CD4-positive, alpha-beta T cell (primary cell): ENCODE measurements at regions of chr15 and their contacts with region 1.

Region 1: DNA sequence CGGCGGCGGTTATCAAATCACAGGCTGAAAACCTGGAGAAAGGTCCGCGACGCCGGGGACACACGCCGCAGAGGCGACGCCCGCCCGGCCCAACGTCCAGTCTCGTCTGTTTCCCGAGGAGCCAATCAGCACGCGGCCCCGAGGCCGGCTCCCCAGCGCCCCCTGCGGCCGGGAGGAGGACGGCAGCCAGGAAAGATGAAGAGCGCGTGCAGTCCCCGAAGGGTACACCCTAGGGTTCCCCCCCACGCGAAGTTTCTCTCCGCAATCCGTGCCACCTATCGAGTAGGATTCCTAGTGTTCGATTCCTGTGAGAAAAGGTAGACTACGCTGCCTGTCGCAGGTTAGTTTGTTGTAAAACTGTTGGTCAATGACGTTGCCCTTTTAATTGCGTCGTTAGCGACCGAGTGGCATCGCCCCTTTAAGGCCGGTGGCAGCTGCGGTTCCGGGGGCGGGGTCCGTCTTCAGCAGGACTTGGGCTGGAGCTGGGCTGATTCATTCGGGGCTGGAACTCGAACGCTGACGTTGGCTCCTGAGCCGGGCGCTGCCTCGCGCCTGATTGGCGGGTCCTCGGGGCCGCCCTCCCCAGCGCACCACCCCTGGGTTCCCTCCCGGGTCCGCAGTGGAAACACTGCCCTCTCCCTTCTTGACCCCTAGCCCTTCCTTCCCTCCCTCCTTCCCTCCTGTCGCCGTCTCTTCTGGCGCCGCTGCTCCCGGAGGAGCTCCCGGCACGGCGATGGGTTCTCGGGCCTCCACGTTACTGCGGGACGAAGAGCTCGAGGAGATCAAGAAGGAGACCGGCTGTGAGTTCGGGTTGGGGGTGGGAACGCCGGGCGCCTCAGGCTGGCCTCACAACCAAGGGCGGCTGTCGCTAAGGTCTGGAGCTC is at the starts of genes CHP1 and EXD1:
- DNase-seq: peak; percentile 87 to 97 (median 93)
- ATAC-seq: peak; percentile 93
- H3K4me3 ChIP-seq: peak within 1 kb of the TSS; percentile 88
- H3K4me3 Mint-ChIP-seq: peak within 1 kb of the TSS; percentile 93
- H3K27ac ChIP-seq: peak within 1 kb of the TSS; percentile 54 to 64
- H3K27ac Mint-ChIP-seq: peak within 1 kb of the TSS; percentile 88
- H3K4me1 ChIP-seq: peaks cover 20% of the 10 kb centered on the region
- H3K4me1 Mint-ChIP-seq: peaks cover 40% of the 10 kb centered on the region
- H3K27me3 ChIP-seq: no peaks in the 10 kb centered on the region
- H3K27me3 Mint-ChIP-seq: no peaks in the 10 kb centered on the region
- CTCF ChIP-seq: peak; percentile 98
- total RNA-seq, gene CHP1: 20.7 to 25.5 TPM
- total RNA-seq, gene EXD1: not detected

Region 2: DNA sequence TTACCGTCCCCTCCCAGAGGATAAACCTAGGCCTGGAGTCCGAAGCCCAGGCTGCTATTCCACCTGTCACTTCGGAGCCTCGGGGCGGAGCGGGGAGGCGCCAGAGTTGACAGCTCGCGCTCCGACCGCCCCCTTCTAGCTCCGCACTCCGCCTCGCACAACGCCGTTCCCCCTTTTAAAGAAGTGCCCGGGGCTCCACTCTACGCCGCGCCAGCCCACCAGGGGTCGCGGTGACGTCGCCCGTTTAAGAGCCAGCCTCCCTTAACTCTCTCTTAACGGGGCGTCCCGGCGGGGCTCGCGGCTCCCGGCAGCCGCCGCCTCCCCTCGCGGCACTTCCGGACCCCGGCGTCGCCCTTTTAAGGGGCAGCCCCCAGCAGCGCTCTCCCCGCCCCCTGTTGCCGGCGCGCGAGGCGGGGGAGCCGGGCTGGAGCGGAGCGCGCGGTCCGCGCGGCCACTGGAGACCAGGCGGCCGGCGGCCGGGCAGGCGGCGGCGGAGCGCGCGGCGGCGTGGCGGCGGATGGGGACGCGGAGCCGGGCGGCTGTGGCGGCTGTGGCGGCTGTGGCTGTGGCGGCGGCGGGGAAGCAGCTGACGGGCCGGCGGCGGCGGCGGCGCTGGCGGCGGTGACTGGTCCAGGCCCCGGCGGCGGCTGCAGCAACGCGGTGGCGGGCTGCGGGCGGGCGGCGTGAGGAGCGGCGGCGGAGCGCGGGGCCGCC is 907.5 kb before region 1 on chr15 and contains the start of gene INAFM2:
- CTCF ChIA-PET with region 1: no interaction called
- POLR2A ChIA-PET with region 1: no interaction called
- intact Hi-C with region 1: loop called in 1 of 2 experiments (anchors 5 kb)
- DNase-seq: peak; percentile 75 to 96 (median 87)
- ATAC-seq: peak; percentile 84
- H3K4me3 ChIP-seq: peak within 1 kb of the TSS; percentile 55
- H3K4me3 Mint-ChIP-seq: peak within 1 kb of the TSS; percentile 92
- H3K27ac ChIP-seq: peak within 1 kb of the TSS; percentile 10 to 41
- H3K27ac Mint-ChIP-seq: peak within 1 kb of the TSS; percentile 79
- H3K4me1 ChIP-seq: peaks cover 32% of the 10 kb centered on the region
- H3K4me1 Mint-ChIP-seq: peaks cover 36% of the 10 kb centered on the region
- H3K27me3 ChIP-seq: no peaks in the 10 kb centered on the region
- H3K27me3 Mint-ChIP-seq: no peaks in the 10 kb centered on the region
- CTCF ChIP-seq: peak; percentile 59
- total RNA-seq, gene INAFM2: 6.8 to 7.0 TPM

Region 3: DNA sequence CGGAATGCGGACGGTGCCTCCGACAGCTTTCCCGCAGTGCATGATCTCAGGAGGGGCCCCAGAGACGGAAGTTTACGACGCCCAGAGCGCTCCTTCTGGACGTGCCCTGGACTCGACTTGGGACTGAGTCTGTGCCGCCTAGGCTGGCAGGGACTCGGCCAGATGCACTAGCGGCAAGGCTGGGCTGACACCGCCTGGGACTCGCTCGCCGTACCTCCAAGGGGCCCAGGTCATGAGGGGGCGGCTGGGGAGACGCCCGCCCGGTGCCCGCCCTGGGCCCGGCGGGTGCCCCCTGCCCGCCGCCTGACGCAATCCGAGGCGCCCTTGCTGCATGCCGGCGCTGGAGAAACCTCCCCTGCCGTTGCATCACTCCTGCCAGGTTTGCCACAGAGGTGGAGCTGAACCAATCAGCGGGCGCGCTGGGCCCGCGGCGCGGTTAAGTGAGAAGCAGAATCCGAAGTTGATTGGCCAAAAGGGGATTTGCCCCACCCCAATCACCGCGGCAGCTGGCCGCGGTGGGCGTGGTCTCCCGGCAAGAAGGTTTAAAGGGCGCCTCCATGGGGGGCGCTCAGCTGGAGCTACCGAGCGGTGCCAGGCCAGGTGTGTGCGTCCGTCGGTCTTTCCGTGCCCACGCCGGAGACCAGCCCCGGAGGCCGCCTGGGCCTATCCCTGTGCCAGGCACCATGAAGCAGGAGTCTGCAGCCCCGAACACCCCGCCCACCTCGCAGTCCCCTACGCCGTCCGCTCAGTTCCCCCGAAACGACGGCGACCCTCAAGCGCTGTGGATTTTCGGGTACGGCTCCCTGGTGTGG is 277.8 kb before region 1 on chr15 and contains the start of gene CHAC1:
- CTCF ChIA-PET with region 1: no interaction called
- POLR2A ChIA-PET with region 1: interaction called, 3 read pairs
- intact Hi-C with region 1: loop called in 1 of 2 experiments (anchors 5 kb)
- DNase-seq: peak; percentile 87 to 98 (median 93)
- ATAC-seq: peak; percentile 96
- H3K4me3 ChIP-seq: peak within 1 kb of the TSS; percentile 81
- H3K4me3 Mint-ChIP-seq: peak within 1 kb of the TSS; percentile 96
- H3K27ac ChIP-seq: no peak within 1 kb of the TSS
- H3K27ac Mint-ChIP-seq: peak within 1 kb of the TSS; percentile 82
- H3K4me1 ChIP-seq: peaks cover 18% of the 10 kb centered on the region
- H3K4me1 Mint-ChIP-seq: peaks cover 10% of the 10 kb centered on the region
- H3K27me3 ChIP-seq: peaks cover 0 to 4% of the 10 kb centered on the region in 2 experiments
- H3K27me3 Mint-ChIP-seq: no peaks in the 10 kb centered on the region
- CTCF ChIP-seq: peak; percentile 20
- total RNA-seq, gene CHAC1: 0.42 to 0.47 TPM

Region 4: DNA sequence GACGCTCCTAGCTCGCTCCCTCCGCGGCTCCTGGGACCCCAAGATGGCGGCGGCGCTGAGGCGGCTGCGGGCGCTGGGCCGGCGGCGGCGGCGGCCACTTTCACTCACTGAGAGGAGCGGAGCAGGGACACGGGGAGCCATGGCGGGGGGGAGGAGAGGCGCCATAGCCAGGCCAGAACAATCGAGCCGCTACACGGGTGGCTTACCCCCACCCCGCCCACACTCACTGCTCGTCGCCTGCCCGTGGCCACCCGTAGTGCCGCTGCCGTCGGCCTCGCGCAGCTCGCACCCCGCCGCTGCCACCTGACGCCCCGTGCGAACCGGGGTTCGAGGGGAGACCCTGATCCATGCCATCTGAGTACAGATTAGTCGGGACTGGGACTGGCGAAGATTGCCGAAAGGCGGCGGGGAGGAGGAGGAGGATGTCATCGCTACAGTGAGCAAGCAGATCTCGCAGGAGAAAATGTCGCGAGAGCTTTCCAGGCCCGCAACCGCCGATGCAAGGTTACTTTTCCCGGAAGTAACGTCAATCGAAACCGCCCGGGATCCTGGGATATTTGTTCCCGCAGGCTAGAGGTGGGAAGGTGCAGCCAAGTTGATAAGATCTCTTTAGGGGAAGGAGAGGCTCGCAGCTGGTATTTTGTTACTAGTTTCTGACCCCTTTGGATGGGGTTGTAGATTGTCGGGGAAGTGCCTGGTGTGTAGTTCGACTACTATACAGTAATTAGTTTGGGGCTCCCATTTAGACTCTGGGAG is 114.6 kb before region 1 on chr15 and contains the start of gene INO80:
- CTCF ChIA-PET with region 1: interaction called, 3 read pairs
- POLR2A ChIA-PET with region 1: interaction called, 19 read pairs
- intact Hi-C with region 1: loop called in 1 of 2 experiments (anchors 1 kb)
- DNase-seq: peak; percentile 90 to 98 (median 95)
- ATAC-seq: peak; percentile 79
- H3K4me3 ChIP-seq: peak within 1 kb of the TSS; percentile 99
- H3K4me3 Mint-ChIP-seq: peak within 1 kb of the TSS; percentile 93
- H3K27ac ChIP-seq: peak within 1 kb of the TSS; percentile 79 to 91
- H3K27ac Mint-ChIP-seq: peak within 1 kb of the TSS; percentile 98
- H3K4me1 ChIP-seq: peaks cover 20% of the 10 kb centered on the region
- H3K4me1 Mint-ChIP-seq: peaks cover 25% of the 10 kb centered on the region
- H3K27me3 ChIP-seq: no peaks in the 10 kb centered on the region
- H3K27me3 Mint-ChIP-seq: no peaks in the 10 kb centered on the region
- CTCF ChIP-seq: no peak
- total RNA-seq, gene INO80: 20.3 to 22.9 TPM

Region 5: DNA sequence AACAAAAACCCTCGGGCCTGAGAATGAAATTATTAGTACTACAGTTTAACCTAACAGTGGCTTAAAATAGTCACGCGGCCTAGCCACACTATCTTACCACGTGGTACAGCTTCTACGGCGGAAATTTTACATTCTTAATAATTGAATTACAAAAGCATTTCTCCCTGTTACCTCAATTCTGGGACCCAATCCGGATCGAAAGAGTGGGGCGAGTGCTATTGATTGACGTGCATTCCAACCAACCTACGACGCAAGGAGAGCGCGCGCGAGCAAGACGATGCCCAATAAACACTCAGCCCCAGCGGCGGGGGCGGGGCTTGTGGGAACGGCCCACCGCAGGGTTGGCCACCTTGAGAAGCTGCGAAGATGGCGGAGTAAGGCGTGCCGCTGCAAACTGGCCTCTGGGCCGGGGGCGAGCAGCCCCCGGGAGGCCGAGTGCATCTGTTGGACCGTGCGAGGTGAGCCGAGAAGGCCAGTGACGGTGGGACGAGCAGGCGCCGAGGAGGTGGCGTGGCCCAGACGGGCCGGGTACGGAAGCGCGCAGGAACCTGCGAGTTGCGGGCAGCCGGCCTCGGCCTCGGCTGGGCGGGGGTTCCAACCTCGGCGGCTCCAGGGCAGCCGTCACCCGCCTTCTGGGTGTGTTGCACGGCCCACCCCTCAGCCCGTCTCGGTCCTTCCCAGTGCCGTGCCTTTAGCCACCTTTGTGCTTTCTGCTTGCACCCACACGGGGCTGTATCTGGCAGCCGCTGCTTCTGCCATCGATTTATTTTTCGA is 52.9 kb after region 1 on chr15:
- CTCF ChIA-PET with region 1: interaction called, 3 read pairs
- POLR2A ChIA-PET with region 1: interaction called, 29 read pairs
- intact Hi-C with region 1: loop called (anchors 1 kb)
- DNase-seq: peak; percentile 94 to 99 (median 97)
- ATAC-seq: peak; percentile 96
- H3K4me3 ChIP-seq: peak overlapping the region; percentile 80
- H3K4me3 Mint-ChIP-seq: peak overlapping the region; percentile 91
- H3K27ac ChIP-seq: peak overlapping the region; percentile 83 to 86
- H3K27ac Mint-ChIP-seq: peak overlapping the region; percentile 91
- H3K4me1 ChIP-seq: peaks cover 29% of the 10 kb centered on the region
- H3K4me1 Mint-ChIP-seq: peaks cover 50% of the 10 kb centered on the region
- H3K27me3 ChIP-seq: no peaks in the 10 kb centered on the region
- H3K27me3 Mint-ChIP-seq: no peaks in the 10 kb centered on the region
- CTCF ChIP-seq: no peak

Region 6: GRCh38 chr15:41331833-41332787 is 101.2 kb after region 1 on chr15 and contains the start of gene OIP5:
- CTCF ChIA-PET with region 1: interaction called, 3 read pairs
- POLR2A ChIA-PET with region 1: interaction called, 13 read pairs
- intact Hi-C with region 1: loop called in 1 of 2 experiments (anchors 2 kb)
- DNase-seq: peak; percentile 94 to 99 (median 97)
- ATAC-seq: peak; percentile 96
- H3K4me3 ChIP-seq: peak within 1 kb of the TSS; percentile 77
- H3K4me3 Mint-ChIP-seq: peak within 1 kb of the TSS; percentile 95
- H3K27ac ChIP-seq: peak within 1 kb of the TSS in 1 of 2 donors; percentile 38
- H3K27ac Mint-ChIP-seq: peak within 1 kb of the TSS; percentile 78
- H3K4me1 ChIP-seq: peaks cover 21% of the 10 kb centered on the region
- H3K4me1 Mint-ChIP-seq: peaks cover 19% of the 10 kb centered on the region
- H3K27me3 ChIP-seq: no peaks in the 10 kb centered on the region
- H3K27me3 Mint-ChIP-seq: no peaks in the 10 kb centered on the region
- CTCF ChIP-seq: peak; percentile 58
- total RNA-seq, gene OIP5: 0.20 to 0.36 TPM